Esophagus muscularis mucosa (tissue), 4 donors: ENCODE measurements at regions of chr1 and their contacts with region 1.

Region 1: DNA sequence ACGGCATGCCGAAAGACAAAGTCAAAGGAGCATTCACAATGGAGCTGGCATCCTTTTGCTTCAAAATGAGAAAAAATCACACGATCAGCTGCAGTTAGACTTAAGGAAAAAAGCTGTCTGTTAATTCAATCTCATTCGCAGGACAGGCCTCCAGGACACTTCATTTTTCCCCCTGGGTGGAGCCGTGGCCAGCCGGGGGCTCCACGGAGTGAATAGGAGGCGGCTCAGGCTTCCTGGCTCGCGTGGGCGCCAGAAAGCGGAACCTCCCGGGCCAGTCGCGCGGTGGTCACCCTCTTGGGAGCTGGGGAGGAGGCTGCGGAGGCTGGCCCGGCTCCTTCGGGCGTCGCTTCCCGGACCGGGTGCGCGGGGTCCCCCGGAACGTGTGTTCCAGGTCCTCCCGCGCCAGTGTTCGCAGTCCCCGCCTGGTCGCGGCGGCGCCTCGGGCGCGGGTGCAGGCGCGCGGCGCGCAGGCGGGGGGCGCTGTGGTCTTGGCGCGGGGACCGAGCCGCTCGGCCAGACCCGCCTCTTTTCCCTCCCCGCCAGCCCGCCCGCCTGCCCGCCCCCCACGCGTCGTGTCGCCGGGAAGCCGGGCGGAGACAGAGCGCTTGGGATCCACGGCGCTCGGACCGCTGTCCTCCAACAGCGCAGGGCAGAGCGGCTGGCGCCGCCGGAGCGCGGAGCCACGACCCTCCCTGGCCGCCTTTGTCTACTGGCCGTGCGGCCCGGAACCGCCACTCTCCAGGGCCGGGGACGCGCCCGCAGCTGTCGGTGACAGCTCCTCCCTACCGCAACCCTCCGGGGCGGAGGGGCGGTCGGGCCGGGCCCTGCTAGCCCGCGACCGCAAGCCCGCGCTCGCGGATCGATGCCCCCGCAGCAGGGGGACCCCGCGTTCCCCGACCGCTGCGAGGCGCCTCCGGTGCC is at the start of gene RHOU:
- DNase-seq: peak; percentile 92
- H3K4me3 ChIP-seq: peak within 1 kb of the TSS; percentile 89 to 97 (median 96)
- H3K27ac ChIP-seq: peak within 1 kb of the TSS; percentile 90 to 95 (median 92)
- H3K4me1 ChIP-seq: peaks cover 15 to 47% (median 41%) of the 10 kb centered on the region in 4 donors
- H3K27me3 ChIP-seq: no peaks in the 10 kb centered on the region
- CTCF ChIP-seq: peak; percentile 94 to 96 (median 94)
- EP300 ChIP-seq: no peak
- POLR2A ChIP-seq: peak; percentile 36
- total RNA-seq, gene RHOU: 24.1 to 36.0 (median 26.0) TPM

Region 2: GRCh38 chr1:228664399-228664914 is 70.7 kb before region 1 on chr1:
- intact Hi-C with region 1: loop called (anchors 5 kb)
- DNase-seq: peak; percentile 91
- H3K4me3 ChIP-seq: no peak overlapping the region
- H3K27ac ChIP-seq: no peak overlapping the region
- H3K4me1 ChIP-seq: peaks cover 0 to 19% (median 9%) of the 10 kb centered on the region in 4 donors
- H3K27me3 ChIP-seq: no peaks in the 10 kb centered on the region
- CTCF ChIP-seq: peak; percentile 79 to 86 (median 83)
- EP300 ChIP-seq: no peak
- POLR2A ChIP-seq: no peak

Region 3: GRCh38 chr1:228684607-228685006 is 50.5 kb before region 1 on chr1:
- intact Hi-C with region 1: no loop called
- DNase-seq: no peak
- H3K4me3 ChIP-seq: no peak overlapping the region
- H3K27ac ChIP-seq: no peak overlapping the region
- H3K4me1 ChIP-seq: peaks cover 0 to 4% (median 0%) of the 10 kb centered on the region in 4 donors
- H3K27me3 ChIP-seq: peaks cover 0 to 17% (median 0%) of the 10 kb centered on the region in 4 donors
- CTCF ChIP-seq: no peak
- EP300 ChIP-seq: no peak
- POLR2A ChIP-seq: no peak

Region 4: GRCh38 chr1:228837817-228838716 is 102.9 kb after region 1 on chr1:
- intact Hi-C with region 1: loop called (anchors 10 kb)
- DNase-seq: no peak
- H3K4me3 ChIP-seq: no peak overlapping the region
- H3K27ac ChIP-seq: peak overlapping the region; percentile 56 to 70 (median 66)
- H3K4me1 ChIP-seq: peaks cover 9 to 30% (median 24%) of the 10 kb centered on the region in 4 donors
- H3K27me3 ChIP-seq: no peaks in the 10 kb centered on the region
- CTCF ChIP-seq: no peak
- EP300 ChIP-seq: peak; percentile 3
- POLR2A ChIP-seq: no peak

Region 5: DNA sequence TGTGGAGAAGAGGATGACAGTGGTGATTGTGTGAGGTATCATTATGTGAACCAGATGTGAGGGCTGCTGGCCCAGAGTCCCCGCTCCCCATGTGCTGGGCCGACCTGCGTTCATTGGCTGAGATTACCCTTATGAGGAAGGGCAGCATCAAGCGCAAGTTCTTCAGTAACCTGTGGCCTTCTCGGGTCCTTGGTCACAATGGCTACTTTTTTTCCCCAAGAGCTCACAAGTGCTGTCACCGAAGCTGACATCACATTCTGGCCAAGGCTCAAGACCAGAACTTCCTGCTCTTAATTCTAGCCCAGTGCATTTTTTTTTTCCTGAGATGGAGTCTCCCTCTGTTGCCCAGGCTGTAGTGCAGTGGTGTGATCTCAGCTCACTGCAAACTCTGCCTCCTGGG is 263.0 kb after region 1 on chr1:
- intact Hi-C with region 1: loop called (anchors 5 kb)
- DNase-seq: no peak
- H3K4me3 ChIP-seq: no peak overlapping the region
- H3K27ac ChIP-seq: no peak overlapping the region
- H3K4me1 ChIP-seq: peaks cover 0 to 1% (median under 1%) of the 10 kb centered on the region in 4 donors
- H3K27me3 ChIP-seq: no peaks in the 10 kb centered on the region
- CTCF ChIP-seq: no peak
- EP300 ChIP-seq: no peak
- POLR2A ChIP-seq: no peak

Region 6: DNA sequence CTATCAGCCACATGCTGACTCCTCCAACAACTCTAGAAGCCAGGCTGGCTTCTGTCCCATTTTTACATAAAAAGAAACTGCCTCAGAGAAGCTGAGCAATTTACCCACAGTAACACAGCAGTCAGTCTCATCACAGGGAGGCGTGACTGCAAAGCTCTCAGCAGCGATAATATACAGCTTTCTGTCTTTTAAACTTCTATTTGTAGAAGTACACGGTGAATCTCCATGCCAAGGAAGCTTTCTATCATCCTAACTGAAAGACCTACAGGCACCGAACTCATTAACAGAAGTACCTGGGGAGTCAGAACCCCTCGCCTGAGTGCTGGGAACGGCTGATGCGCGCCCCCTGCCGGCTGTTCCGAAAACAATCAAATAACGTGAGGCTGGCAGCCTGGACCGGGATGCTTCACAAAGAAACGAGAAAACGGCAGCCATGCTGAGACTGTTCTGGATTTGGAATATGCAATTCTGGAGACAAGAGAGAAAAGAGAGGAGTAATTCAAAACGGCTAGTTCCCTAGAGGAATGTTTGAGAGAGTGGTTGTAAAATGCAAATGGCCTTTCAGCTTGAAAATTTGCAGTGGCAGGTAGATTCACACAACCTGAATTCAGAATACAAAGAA is 492.3 kb after region 1 on chr1:
- intact Hi-C with region 1: loop called (anchors 1 kb)
- DNase-seq: no peak
- H3K4me3 ChIP-seq: no peak overlapping the region
- H3K27ac ChIP-seq: peak overlapping the region in 1 of 4 donors; percentile 17
- H3K4me1 ChIP-seq: peaks cover 24 to 64% (median 55%) of the 10 kb centered on the region in 4 donors
- H3K27me3 ChIP-seq: no peaks in the 10 kb centered on the region
- CTCF ChIP-seq: peak; percentile 85 to 89 (median 86)
- EP300 ChIP-seq: no peak
- POLR2A ChIP-seq: no peak